WTC11 (cell line): ENCODE measurements at regions of chr9 and their contacts with region 1.

Region 1: DNA sequence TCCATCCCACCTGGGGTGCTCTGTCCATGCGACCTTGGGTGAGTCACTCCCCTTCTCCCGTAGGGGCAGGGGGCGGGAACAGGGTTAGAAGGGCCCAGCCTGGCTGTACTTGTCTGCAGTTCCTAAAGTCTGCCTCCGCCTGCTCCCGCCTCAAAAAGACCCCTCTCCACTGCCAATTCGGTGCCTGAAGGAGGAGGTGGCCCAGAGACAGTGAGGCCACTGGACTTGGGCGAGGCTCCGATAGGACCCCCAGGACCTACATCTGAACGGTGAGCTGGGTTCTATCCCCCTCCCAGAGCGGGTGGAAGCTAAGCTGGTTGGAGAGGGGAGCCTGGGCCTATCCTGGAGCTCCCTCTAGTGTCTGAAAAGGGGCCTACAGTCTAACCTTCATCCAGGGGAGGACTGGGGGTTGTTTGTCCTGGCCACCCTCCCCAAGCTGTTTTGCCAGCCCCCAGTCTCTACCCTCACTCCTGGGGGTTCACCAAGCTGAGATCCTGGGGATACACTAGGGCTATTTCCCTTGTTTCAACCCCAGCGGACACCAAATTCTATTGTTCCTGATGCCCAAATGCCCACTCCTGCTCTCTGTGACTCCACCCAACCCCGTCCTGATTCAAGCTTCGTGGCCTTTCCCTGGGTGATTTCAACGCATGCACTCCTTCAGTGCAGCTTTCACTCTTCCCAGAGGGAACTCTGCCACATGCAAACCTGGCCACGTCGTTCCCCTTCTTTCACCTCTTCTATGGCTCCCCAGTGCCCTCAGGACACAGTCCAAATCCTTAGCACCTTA is 6.1 kb upstream of the CRB2 start:
- DNase-seq: peak; percentile 84
- ATAC-seq: peak; percentile 78
- H3K4me3 Mint-ChIP-seq: no peak overlapping the region
- H3K27ac Mint-ChIP-seq: no peak overlapping the region
- H3K4me1 Mint-ChIP-seq: peaks cover 11% of the 10 kb centered on the region
- H3K27me3 Mint-ChIP-seq: peaks cover 15% of the 10 kb centered on the region
- CTCF ChIP-seq: peak; percentile 97

Region 2: DNA sequence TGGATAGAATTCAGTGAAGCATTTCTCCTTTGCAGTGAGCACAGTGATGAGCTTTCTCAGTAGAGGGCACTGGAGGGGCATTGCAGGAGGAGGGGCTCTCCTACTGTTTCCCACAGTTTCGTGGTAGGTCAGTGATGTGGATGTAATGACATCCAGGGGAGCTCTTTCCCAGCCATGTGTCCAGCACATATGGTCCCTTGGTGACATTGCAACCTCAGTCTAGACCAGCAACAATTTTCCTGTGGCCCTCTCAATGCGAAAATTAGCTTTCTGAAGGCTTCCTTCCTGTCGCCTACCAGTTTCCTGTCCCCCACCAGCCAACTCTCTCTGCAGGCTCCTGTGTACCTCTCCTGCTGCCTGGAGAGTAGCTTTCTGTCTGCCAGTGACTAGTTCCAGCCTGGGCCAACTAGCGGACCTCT is 514.6 kb before region 1 on chr9:
- CTCF ChIA-PET with region 1: interaction called, 10 read pairs
- POLR2A ChIA-PET with region 1: no interaction called
- DNase-seq: no peak
- ATAC-seq: peak; percentile 93
- H3K4me3 Mint-ChIP-seq: no peak overlapping the region
- H3K27ac Mint-ChIP-seq: peak overlapping the region; percentile 28; the same call in 1 of the 2 replicates
- H3K4me1 Mint-ChIP-seq: peaks cover 10% of the 10 kb centered on the region
- H3K27me3 Mint-ChIP-seq: peaks cover 5% of the 10 kb centered on the region; the same call in 1 of the 2 replicates
- CTCF ChIP-seq: no peak

Region 3: GRCh38 chr9:123093141-123093540 is 256.7 kb before region 1 on chr9:
- CTCF ChIA-PET with region 1: interaction called, 18 read pairs
- POLR2A ChIA-PET with region 1: no interaction called
- DNase-seq: no peak
- ATAC-seq: no peak
- H3K4me3 Mint-ChIP-seq: no peak overlapping the region
- H3K27ac Mint-ChIP-seq: no peak overlapping the region
- H3K4me1 Mint-ChIP-seq: peaks cover 33% of the 10 kb centered on the region
- H3K27me3 Mint-ChIP-seq: no peaks in the 10 kb centered on the region
- CTCF ChIP-seq: no peak

Region 4: DNA sequence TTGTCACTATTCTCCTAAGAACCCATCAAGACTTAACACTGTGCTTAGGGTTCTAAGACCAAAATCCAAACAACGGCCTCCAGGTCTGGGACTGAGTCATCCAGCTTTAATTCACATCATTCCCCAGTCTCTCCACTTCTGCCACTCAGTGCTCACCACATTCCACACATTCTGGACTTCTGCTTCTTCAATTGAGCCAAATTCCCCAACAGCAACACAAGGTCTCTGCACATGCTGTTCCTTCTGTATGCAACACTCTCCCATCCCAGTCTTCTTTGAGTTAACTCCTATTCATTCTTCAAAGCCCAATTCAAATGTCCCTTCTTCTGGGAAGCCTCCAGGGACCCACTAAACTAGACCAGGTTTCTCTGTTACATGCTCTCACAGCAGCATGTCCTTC is 218.6 kb before region 1 on chr9:
- CTCF ChIA-PET with region 1: interaction called, 10 read pairs
- POLR2A ChIA-PET with region 1: no interaction called
- DNase-seq: no peak
- ATAC-seq: no peak
- H3K4me3 Mint-ChIP-seq: no peak overlapping the region
- H3K27ac Mint-ChIP-seq: no peak overlapping the region
- H3K4me1 Mint-ChIP-seq: peaks cover 5% of the 10 kb centered on the region
- H3K27me3 Mint-ChIP-seq: no peaks in the 10 kb centered on the region
- CTCF ChIP-seq: no peak

Region 5: GRCh38 chr9:123291736-123292135 is 58.1 kb before region 1 on chr9:
- CTCF ChIA-PET with region 1: interaction called, 10 read pairs
- POLR2A ChIA-PET with region 1: no interaction called
- DNase-seq: no peak
- ATAC-seq: no peak
- H3K4me3 Mint-ChIP-seq: no peak overlapping the region
- H3K27ac Mint-ChIP-seq: no peak overlapping the region
- H3K4me1 Mint-ChIP-seq: no peaks in the 10 kb centered on the region; the same call in 1 of the 2 replicates
- H3K27me3 Mint-ChIP-seq: no peaks in the 10 kb centered on the region
- CTCF ChIP-seq: no peak

Region 6: DNA sequence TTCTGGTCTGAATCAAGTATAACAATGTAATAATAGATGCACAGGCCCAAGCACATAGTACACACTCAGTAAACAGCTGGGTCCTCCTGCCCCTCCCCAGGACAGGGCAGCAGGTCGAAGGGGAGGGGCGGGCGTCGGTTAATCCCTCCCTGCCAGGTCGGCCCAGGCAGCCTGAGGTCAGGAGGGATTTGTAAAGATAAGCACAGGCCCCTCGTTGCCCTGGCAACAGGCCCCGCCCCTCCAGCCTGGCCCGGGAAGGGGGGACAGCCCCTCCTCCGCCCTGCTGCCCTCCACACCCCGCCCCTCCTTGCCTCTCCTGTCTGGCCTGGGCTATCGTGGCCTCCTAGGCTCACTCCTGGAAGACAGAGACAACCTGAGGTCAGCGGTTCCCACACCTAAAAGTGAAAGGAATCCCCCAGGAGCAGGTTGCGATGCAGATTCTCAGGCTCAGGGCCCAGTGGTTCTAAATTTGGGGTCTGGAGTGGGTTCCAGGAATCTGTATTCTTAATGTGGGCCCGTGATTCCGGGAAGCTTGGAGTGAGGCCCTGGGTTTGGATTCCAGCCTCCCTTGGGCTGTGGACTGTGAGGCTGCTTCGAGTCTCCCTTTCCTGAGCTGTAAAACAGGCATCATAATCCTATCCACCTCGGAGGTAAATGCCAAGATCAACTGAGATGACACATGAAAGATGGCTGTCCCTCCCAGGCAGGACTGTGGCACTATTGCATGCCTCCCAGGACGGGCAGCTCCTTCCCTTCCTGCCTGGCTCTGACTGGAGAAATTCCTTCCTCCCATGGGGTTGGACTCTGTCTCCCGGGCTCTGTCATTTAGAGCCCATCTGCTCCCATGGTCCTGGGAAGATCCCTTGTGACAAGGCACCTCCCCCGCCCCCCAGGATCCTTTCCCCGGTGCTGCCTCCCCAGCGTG is 10.5 kb after region 1 on chr9:
- CTCF ChIA-PET with region 1: interaction called, 34 read pairs
- POLR2A ChIA-PET with region 1: no interaction called
- DNase-seq: peak; percentile 98
- ATAC-seq: peak; percentile 78
- H3K4me3 Mint-ChIP-seq: 0 out of 2 replicates have a peak overlapping the region, but pooled peaks have one; percentile 24
- H3K27ac Mint-ChIP-seq: peak overlapping the region; percentile 3; the same call in 1 of the 2 replicates
- H3K4me1 Mint-ChIP-seq: peaks cover 58% of the 10 kb centered on the region
- H3K27me3 Mint-ChIP-seq: peaks cover 10% of the 10 kb centered on the region
- CTCF ChIP-seq: no peak

Region 7: GRCh38 chr9:123417691-123418430 is 68.0 kb after region 1 on chr9:
- CTCF ChIA-PET with region 1: no interaction called
- POLR2A ChIA-PET with region 1: no interaction called
- DNase-seq: no peak
- ATAC-seq: 0 out of 2 replicates have a peak, but pooled peaks have one; percentile 16
- H3K4me3 Mint-ChIP-seq: no peak overlapping the region
- H3K27ac Mint-ChIP-seq: peak overlapping the region; percentile 57; the same call in 1 of the 2 replicates
- H3K4me1 Mint-ChIP-seq: peaks cover 44% of the 10 kb centered on the region
- H3K27me3 Mint-ChIP-seq: no peaks in the 10 kb centered on the region
- CTCF ChIP-seq: no peak